Activated T-helper 1 cell treated with anti-CD3 and anti-CD28 coated beads, Interleukin-12 subunit alpha, Interleukin-12 subunit beta, Interleukin-2, Interleukin-4 antibody, amounts not matched to agents 30 ng/mL and 10 ng/mL and 1 ng/mL, durations not matched to agents 14 hours and 24 hours and 36 hours (primary cell): ENCODE measurements at regions of chr7 and their contacts with region 1.

Region 1: DNA sequence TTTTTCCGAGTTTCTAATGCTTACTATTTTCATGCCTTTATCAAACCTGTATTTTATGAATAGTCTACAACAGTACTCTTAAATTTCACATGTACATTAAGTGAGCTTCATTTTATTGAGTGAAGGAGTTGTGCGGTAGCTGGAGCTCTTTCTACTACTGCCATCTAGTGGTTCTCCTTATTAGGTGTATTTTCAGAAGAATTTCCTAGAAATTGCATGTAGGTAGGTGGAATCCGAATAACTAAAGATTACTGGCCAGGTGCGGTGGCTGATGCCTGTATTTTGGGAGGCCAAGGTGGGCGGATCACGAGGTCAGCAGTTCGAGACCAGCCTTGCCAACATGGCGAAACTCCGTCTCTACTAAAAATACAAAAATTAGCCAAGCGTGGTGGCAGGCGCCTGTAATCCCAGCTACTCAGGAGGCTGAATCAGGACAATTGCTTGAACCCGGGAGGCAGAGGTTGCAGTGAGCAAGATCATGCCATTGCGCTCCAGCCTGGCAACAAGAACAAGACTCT is 38.3 kb downstream of the LRRC72 start:
- DNase-seq: no peak
- H3K4me3 Mint-ChIP-seq: no peak overlapping the region
- H3K27ac Mint-ChIP-seq: no peak overlapping the region
- H3K4me1 Mint-ChIP-seq: peaks cover 13% of the 10 kb centered on the region
- H3K27me3 Mint-ChIP-seq: peaks cover 5% of the 10 kb centered on the region

Region 2: GRCh38 chr7:15305002-15305600 is 1259.9 kb before region 1 on chr7:
- intact Hi-C with region 1: loop called (anchors 10 kb)
- DNase-seq: no peak
- H3K4me3 Mint-ChIP-seq: no peak overlapping the region
- H3K27ac Mint-ChIP-seq: no peak overlapping the region
- H3K4me1 Mint-ChIP-seq: no peaks in the 10 kb centered on the region
- H3K27me3 Mint-ChIP-seq: no peaks in the 10 kb centered on the region

Region 3: GRCh38 chr7:16078076-16078952 is 486.7 kb before region 1 on chr7:
- intact Hi-C with region 1: loop called (anchors 1 kb)
- DNase-seq: no peak
- H3K4me3 Mint-ChIP-seq: no peak overlapping the region
- H3K27ac Mint-ChIP-seq: no peak overlapping the region
- H3K4me1 Mint-ChIP-seq: no peaks in the 10 kb centered on the region
- H3K27me3 Mint-ChIP-seq: no peaks in the 10 kb centered on the region

Region 4: GRCh38 chr7:16420649-16421332 is 144.2 kb before region 1 on chr7:
- intact Hi-C with region 1: loop called (anchors 1 kb)
- DNase-seq: peak; percentile 80
- H3K4me3 Mint-ChIP-seq: peak overlapping the region; percentile 87
- H3K27ac Mint-ChIP-seq: peak overlapping the region; percentile 82
- H3K4me1 Mint-ChIP-seq: peaks cover 22% of the 10 kb centered on the region
- H3K27me3 Mint-ChIP-seq: no peaks in the 10 kb centered on the region

Region 5: GRCh38 chr7:16431646-16432424 is 133.1 kb before region 1 on chr7:
- intact Hi-C with region 1: loop called (anchors 1 kb)
- DNase-seq: no peak
- H3K4me3 Mint-ChIP-seq: no peak overlapping the region
- H3K27ac Mint-ChIP-seq: no peak overlapping the region
- H3K4me1 Mint-ChIP-seq: no peaks in the 10 kb centered on the region
- H3K27me3 Mint-ChIP-seq: peaks cover 8% of the 10 kb centered on the region

Region 6: DNA sequence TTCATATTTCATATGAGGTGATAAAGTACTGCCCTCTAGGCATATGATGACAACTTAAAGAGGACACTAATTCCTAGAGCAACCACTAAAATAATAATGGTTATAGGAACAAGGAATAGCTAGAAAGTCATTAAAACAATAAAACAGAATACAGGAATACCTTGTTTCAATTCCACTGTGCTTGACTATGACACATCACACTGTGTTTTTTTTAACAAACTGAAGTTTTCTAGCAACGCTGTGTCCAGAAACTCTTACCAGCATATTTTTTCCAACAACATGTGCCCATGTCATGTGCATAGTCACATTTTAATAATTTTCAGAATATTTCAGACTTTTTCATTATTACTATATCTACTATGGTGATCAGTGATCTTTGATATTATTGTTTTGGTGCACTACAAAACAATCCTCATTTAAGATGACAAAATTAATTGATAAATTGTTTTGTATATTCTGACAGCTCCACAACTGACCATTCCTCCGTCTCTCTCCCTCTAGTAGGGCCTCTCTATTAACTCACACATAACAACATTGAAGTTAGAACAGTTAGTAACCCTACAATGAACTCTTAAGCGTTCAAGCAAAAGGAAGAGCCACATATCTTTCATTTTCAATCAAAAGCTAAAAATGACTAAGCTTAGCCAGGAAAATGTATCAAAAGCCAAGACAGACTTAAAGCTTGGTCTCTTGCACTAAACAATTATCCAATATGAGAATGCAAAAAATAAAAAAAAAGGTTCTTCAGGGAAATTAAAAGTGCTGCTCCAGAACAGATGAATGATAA is 1289.5 kb after region 1 on chr7:
- intact Hi-C with region 1: no loop called
- DNase-seq: no peak
- H3K4me3 Mint-ChIP-seq: no peak overlapping the region
- H3K27ac Mint-ChIP-seq: peak overlapping the region; percentile 15
- H3K4me1 Mint-ChIP-seq: peaks cover 26% of the 10 kb centered on the region
- H3K27me3 Mint-ChIP-seq: no peaks in the 10 kb centered on the region